PC-9 (cell line): ENCODE measurements at regions of chr2 and their contacts with region 1.

Region 1: DNA sequence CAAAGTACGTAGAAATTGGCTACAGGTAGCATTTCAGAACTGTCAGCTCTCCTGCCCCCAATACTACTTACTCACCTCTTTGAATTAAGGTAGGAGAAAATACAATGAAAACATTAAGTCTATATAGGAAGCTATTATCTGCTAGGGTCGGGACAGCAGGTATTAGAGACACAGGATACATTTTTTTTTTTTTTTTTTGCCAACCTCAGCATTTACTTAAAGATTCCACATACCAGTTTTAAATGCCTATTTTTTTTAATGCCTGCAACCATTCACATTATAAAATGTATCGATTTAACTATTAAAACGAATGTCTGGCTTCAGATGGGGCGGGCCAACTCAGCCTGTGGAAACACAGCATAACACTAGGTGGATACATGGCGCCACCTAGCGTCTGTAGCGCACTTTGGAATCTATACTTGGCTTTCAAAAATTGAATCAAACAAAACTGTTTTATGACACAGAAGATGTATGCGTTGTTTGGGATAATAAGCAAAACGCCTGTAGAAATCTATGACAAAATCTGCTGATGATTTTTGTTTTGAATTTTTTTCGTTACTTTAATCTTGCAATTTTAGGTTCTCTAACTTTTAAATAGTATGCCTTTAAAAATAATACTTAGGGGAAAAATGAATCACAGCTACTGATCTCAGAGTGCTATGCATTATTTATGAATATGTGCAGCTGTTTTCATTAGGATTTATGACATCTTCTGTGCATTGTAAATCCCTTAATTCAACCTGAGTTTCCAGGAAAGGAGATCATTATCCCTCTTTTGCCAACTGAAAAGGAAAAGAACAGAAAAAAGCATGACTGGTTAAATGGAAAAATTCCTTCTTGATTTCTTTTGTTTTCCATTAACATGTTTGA is 261.0 kb downstream of the NYAP2 start:
- DNase-seq: peak; percentile 54 to 78
- H3K4me3 ChIP-seq: no peak overlapping the region
- H3K27ac ChIP-seq: no peak overlapping the region
- H3K4me1 ChIP-seq: no peaks in the 10 kb centered on the region
- H3K27me3 ChIP-seq: no peaks in the 10 kb centered on the region
- CTCF ChIP-seq: peak; percentile 100

Region 2: DNA sequence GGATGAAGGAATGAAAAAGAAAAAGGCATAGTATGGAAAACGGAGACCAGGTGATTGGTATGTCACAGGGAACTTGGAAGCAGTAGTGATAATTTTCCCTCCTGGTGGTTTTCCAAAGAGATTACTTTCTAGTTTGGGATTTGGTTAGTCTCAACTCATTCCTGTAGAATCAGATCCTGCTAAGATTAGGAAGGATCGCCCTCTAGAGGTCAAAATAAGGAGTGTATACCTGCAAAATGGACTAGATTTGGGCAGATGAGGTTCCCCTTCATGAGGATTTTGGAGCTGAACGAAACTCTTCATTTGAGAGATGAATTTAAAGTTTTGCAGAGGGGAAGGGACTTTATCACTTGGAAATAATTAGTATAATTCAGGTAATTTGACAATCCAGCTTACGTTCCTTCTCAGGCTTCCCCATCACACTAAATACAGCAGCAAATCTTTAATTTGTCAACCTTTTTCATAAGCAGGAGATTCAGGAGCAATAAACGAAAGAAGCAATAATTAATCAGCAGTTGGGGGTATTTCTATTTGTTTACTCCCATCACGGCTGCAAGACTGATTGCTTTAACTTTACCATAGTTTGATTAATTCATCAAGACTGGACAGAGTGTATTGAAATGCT is 1009.6 kb before region 1 on chr2:
- CTCF ChIA-PET with region 1: no interaction called
- POLR2A ChIA-PET with region 1: no interaction called
- intact Hi-C with region 1: loop called (anchors 2 kb)
- DNase-seq: peak; percentile 43 to 75
- H3K4me3 ChIP-seq: no peak overlapping the region
- H3K27ac ChIP-seq: no peak overlapping the region
- H3K4me1 ChIP-seq: peaks cover 6% of the 10 kb centered on the region
- H3K27me3 ChIP-seq: no peaks in the 10 kb centered on the region
- CTCF ChIP-seq: peak; percentile 100

Region 3: GRCh38 chr2:225002039-225002655 is 658.4 kb before region 1 on chr2:
- CTCF ChIA-PET with region 1: interaction called, 4 read pairs
- POLR2A ChIA-PET with region 1: no interaction called
- intact Hi-C with region 1: loop called (anchors 1 kb)
- DNase-seq: peak in 1 of 2 experiments; percentile 48
- H3K4me3 ChIP-seq: no peak overlapping the region
- H3K27ac ChIP-seq: no peak overlapping the region
- H3K4me1 ChIP-seq: no peaks in the 10 kb centered on the region
- H3K27me3 ChIP-seq: 0 out of 2 replicates have a peak, but pooled peaks cover 3% of the 10 kb centered on the region
- CTCF ChIP-seq: peak; percentile 93

Region 4: DNA sequence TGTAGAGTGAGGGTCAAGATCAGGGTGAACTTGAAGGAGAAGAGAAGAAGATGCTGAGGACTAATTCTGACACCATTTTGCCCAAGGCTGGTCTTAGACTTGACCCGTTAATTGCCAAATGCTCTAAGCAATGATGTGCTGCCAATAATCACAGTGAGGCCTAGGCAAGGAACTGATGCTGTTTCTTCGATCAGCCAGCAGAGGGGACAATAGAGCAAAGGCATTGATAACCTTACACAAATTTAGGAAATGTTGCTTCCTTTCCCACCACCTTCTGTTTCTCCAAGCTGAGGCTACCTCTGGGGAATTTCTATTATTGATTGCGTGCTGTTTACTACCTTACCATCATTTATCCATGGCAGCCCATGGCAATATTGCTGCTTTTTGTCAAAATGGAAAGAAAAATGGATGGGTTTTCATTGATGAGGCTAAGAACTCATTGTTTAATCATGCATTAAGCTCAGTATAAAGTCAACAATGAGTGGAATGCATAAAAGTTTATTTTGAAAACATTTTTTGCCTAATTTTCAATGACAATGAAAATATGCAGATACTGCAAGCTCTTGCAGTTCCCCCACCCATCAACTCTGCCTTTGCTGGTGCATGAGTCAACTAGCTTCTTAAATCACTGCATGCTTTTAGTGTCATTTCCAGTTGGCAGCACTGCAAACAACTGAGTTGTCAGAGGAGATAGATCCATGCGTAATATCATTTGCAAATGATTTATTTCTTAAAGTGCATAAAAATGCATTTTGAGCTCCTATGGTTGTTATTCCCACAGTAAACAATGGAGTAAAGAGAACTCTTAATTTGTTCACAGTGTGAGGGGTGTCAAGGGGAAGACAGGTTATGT is 377.4 kb before region 1 on chr2:
- CTCF ChIA-PET with region 1: interaction called, 17 read pairs
- POLR2A ChIA-PET with region 1: no interaction called
- intact Hi-C with region 1: loop called (anchors 1 kb)
- DNase-seq: no peak
- H3K4me3 ChIP-seq: no peak overlapping the region
- H3K27ac ChIP-seq: no peak overlapping the region
- H3K4me1 ChIP-seq: no peaks in the 10 kb centered on the region
- H3K27me3 ChIP-seq: no peaks in the 10 kb centered on the region
- CTCF ChIP-seq: peak; percentile 83

Region 5: DNA sequence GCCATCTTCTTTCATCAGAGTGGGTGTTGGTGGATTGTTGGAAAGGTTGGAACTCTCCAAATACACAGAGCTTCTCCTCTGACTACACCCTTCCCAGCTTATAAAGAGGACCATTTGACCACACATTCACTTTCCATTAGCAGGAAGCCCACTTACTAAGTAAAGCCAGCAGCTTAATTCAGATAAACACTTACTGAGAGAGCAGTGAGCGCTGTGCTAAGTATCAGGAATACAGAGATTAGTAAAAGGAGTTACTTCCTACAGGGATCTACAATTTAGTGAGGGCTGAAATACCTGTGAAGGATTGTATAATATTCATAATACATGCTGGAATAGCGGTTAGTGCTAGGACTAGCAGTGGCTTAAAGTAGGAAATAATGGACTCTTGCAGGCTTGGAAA is 82.0 kb after region 1 on chr2:
- CTCF ChIA-PET with region 1: interaction called, 12 read pairs
- POLR2A ChIA-PET with region 1: no interaction called
- intact Hi-C with region 1: no loop called
- DNase-seq: no peak
- H3K4me3 ChIP-seq: no peak overlapping the region
- H3K27ac ChIP-seq: no peak overlapping the region
- H3K4me1 ChIP-seq: no peaks in the 10 kb centered on the region
- H3K27me3 ChIP-seq: no peaks in the 10 kb centered on the region
- CTCF ChIP-seq: no peak